ENCODE measurements at regions of chr12 and their contacts with region 1.

Region 1: GRCh38 chr12:19915392-19916195 is 452.7 kb upstream of the PDE3A start:
- DNase-seq: peak in 1 of 2 experiments; percentile 20
- H3K4me3 ChIP-seq: no peak overlapping the region
- H3K4me3 Mint-ChIP-seq: no peak overlapping the region
- H3K27ac Mint-ChIP-seq: no peak overlapping the region
- H3K4me1 ChIP-seq: no peaks in the 10 kb centered on the region
- H3K4me1 Mint-ChIP-seq: peaks cover 20% of the 10 kb centered on the region
- H3K27me3 ChIP-seq: no peaks in the 10 kb centered on the region
- H3K27me3 Mint-ChIP-seq: no peaks in the 10 kb centered on the region
- CTCF ChIP-seq: peak; percentile 22 to 78

Region 2: DNA sequence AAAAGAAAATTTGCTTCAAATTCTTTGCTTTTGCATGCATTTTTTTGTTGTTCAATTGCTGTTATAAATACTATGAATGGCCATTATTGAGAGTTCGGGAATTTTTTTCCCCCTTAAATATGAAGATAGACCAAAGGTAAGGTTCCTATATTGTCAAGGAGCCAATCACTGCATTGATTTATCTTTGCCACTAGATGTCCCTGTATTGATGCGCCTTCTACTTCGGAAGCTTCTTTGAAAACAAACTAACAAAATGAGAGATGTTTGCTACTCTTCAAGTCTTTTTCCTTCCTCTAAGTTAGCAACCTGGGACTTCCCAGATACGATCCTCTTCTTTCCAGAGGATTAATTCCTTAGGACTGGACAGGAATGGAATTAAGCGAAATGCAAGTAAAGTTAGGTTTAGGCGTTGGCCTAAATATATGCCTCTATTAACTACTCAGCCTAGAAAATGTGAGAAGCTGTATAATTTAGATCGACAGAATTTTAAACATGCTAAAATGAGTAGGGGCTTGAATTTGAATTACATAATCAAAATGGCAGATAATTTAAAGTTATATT is 158.2 kb before region 1 on chr12:
- CTCF ChIA-PET with region 1: no interaction called
- POLR2A ChIA-PET with region 1: no interaction called
- intact Hi-C with region 1: loop called (anchors 5 kb)
- DNase-seq: peak in 1 of 2 experiments; percentile 23
- H3K4me3 ChIP-seq: no peak overlapping the region
- H3K4me3 Mint-ChIP-seq: no peak overlapping the region
- H3K27ac Mint-ChIP-seq: no peak overlapping the region
- H3K4me1 ChIP-seq: no peaks in the 10 kb centered on the region
- H3K4me1 Mint-ChIP-seq: no peaks in the 10 kb centered on the region
- H3K27me3 ChIP-seq: no peaks in the 10 kb centered on the region
- H3K27me3 Mint-ChIP-seq: no peaks in the 10 kb centered on the region
- CTCF ChIP-seq: peak; percentile 78 to 80

Region 3: GRCh38 chr12:19971396-19971802 is 55.8 kb after region 1 on chr12:
- CTCF ChIA-PET with region 1: no interaction called
- POLR2A ChIA-PET with region 1: no interaction called
- intact Hi-C with region 1: loop called (anchors 2 kb)
- DNase-seq: peak; percentile 82 to 90
- H3K4me3 ChIP-seq: no peak overlapping the region
- H3K4me3 Mint-ChIP-seq: no peak overlapping the region
- H3K27ac Mint-ChIP-seq: peak overlapping the region; percentile 79
- H3K4me1 ChIP-seq: peaks cover 13% of the 10 kb centered on the region
- H3K4me1 Mint-ChIP-seq: peaks cover 25% of the 10 kb centered on the region
- H3K27me3 ChIP-seq: no peaks in the 10 kb centered on the region
- H3K27me3 Mint-ChIP-seq: no peaks in the 10 kb centered on the region
- CTCF ChIP-seq: peak in 1 of 2 experiments; percentile 19

Region 4: GRCh38 chr12:20194171-20194570 is 278.6 kb after region 1 on chr12:
- CTCF ChIA-PET with region 1: no interaction called
- POLR2A ChIA-PET with region 1: no interaction called
- intact Hi-C with region 1: loop called (anchors 10 kb)
- DNase-seq: peak; percentile 49 to 62
- H3K4me3 ChIP-seq: no peak overlapping the region
- H3K4me3 Mint-ChIP-seq: no peak overlapping the region
- H3K27ac Mint-ChIP-seq: no peak overlapping the region
- H3K4me1 ChIP-seq: peaks cover 11% of the 10 kb centered on the region
- H3K4me1 Mint-ChIP-seq: peaks cover 20% of the 10 kb centered on the region
- H3K27me3 ChIP-seq: no peaks in the 10 kb centered on the region
- H3K27me3 Mint-ChIP-seq: no peaks in the 10 kb centered on the region
- CTCF ChIP-seq: peak; percentile 44 to 69

Region 5: GRCh38 chr12:20248646-20249045 is 333.1 kb after region 1 on chr12:
- CTCF ChIA-PET with region 1: no interaction called
- POLR2A ChIA-PET with region 1: no interaction called
- intact Hi-C with region 1: loop called (anchors 1 kb)
- DNase-seq: peak in 1 of 2 experiments; percentile 15
- H3K4me3 ChIP-seq: no peak overlapping the region
- H3K4me3 Mint-ChIP-seq: no peak overlapping the region
- H3K27ac Mint-ChIP-seq: no peak overlapping the region
- H3K4me1 ChIP-seq: no peaks in the 10 kb centered on the region
- H3K4me1 Mint-ChIP-seq: no peaks in the 10 kb centered on the region
- H3K27me3 ChIP-seq: no peaks in the 10 kb centered on the region
- H3K27me3 Mint-ChIP-seq: peaks cover 3% of the 10 kb centered on the region
- CTCF ChIP-seq: no peak

Region 6: DNA sequence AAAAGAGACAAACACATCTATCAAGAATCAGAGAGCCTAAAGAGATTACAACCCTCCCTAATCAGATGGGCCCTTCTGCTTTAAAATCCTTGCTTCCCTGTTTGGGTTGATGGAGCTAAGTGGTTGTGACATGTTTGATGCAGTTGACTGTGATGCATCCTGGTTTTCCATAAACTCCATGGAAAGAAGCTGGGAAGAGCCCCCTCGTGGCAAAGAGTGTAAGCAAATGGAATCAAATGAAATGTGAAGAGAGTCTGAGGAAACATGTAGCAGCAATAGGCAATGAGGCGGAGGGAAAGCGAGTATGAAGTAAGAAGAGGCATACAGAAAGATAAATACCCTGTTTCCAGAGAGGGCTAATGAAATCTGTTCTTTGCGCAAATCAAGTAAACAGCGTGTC is 709.1 kb after region 1 on chr12:
- CTCF ChIA-PET with region 1: no interaction called
- POLR2A ChIA-PET with region 1: no interaction called
- intact Hi-C with region 1: loop called (anchors 5 kb)
- DNase-seq: peak in 1 of 2 experiments; percentile 55
- H3K4me3 ChIP-seq: no peak overlapping the region
- H3K4me3 Mint-ChIP-seq: no peak overlapping the region
- H3K27ac Mint-ChIP-seq: no peak overlapping the region
- H3K4me1 ChIP-seq: peaks cover 11% of the 10 kb centered on the region; the same call in 1 of the 2 replicates
- H3K4me1 Mint-ChIP-seq: peaks cover 14% of the 10 kb centered on the region
- H3K27me3 ChIP-seq: no peaks in the 10 kb centered on the region
- H3K27me3 Mint-ChIP-seq: peaks cover 3% of the 10 kb centered on the region
- CTCF ChIP-seq: peak; percentile 40 to 63